AG04450 (cell line): ENCODE measurements at regions of chr1 and their contacts with region 1.

Region 1: GRCh38 chr1:67535474-67535873 is 105.3 kb upstream of the SERBP1 start:
- DNase-seq: peak; percentile 65
- H3K4me3 ChIP-seq: no peak overlapping the region
- H3K27ac ChIP-seq: no peak overlapping the region
- H3K27me3 ChIP-seq: no peaks in the 10 kb centered on the region
- CTCF ChIP-seq: peak; percentile 99

Region 2: GRCh38 chr1:67552336-67552759 is 16.9 kb after region 1 on chr1:
- CTCF ChIA-PET with region 1: interaction called, 19 read pairs
- POLR2A ChIA-PET with region 1: no interaction called
- DNase-seq: no peak
- H3K4me3 ChIP-seq: no peak overlapping the region
- H3K27ac ChIP-seq: no peak overlapping the region
- H3K27me3 ChIP-seq: no peaks in the 10 kb centered on the region
- CTCF ChIP-seq: 0 out of 2 replicates have a peak, but pooled peaks have one; percentile 3

Region 3: DNA sequence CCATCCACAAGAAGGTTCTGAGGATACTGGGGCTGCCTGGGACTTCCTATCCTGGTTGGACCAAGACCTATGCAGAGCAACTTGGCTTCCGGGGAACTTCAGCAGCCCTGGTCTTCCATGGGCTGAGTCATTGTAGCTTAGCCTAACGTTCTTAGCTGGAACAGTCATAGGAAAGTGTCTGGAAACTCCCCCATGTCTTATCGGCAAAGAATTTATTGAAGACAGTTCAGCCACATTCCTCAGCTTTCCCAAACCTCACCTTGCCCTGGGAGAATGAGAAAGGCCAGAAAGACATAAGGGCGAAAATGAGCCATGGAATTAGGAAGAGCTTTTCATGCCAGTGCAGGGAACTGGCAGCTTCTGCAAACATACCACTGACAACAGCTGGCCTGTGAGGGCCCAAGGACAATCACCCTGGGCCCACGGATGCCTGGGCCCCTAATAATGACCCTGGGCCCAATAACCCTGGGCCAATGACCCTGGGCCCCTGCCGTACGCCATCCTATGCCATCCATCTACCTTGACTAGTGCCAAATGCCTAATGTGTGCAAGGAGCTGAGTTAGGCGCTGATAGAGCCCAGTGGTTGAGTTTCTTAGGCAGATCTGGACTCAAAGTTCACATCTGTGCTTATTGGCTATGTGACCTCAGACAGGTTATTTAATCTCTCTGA is 35.1 kb after region 1 on chr1:
- CTCF ChIA-PET with region 1: interaction called, 21 read pairs
- POLR2A ChIA-PET with region 1: no interaction called
- DNase-seq: peak; percentile 86
- H3K4me3 ChIP-seq: no peak overlapping the region
- H3K27ac ChIP-seq: peak overlapping the region; percentile 89
- H3K27me3 ChIP-seq: no peaks in the 10 kb centered on the region
- CTCF ChIP-seq: no peak

Region 4: DNA sequence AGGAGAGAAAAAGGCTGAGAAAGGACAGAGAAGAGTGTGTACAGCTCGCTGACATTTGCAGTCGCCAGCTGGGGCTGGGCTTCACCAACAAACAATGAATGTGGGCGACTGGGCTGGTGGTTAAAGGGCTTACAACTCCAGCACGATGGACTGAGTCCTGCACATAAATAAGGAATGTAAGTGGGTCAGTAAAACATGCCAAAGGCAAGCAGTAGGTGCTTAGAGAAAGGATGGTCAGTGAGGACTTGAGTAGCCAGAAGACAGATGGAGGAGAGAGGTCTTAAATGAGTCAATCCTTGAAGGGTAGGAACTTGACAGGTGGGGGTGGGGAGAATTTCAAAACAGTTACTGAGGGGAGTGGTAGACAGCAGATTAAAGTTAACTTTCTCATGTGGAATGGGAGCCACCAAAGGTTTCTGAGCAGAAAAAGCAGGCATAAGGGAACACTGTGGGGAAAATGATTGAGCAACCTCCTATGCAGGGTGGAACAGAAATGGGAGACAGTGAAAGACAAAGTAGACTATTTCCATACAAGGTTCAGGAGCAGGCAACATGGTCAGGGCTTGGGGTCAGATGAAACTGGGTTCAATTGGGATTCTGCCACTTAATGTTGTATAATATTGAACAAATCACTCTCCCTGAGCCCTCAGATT is 186.9 kb after region 1 on chr1:
- CTCF ChIA-PET with region 1: interaction called, 10 read pairs
- POLR2A ChIA-PET with region 1: no interaction called
- DNase-seq: no peak
- H3K4me3 ChIP-seq: no peak overlapping the region
- H3K27ac ChIP-seq: no peak overlapping the region
- H3K27me3 ChIP-seq: no peaks in the 10 kb centered on the region
- CTCF ChIP-seq: no peak

Region 5: GRCh38 chr1:67749844-67750689 is 214.6 kb after region 1 on chr1:
- CTCF ChIA-PET with region 1: interaction called, 456 read pairs
- POLR2A ChIA-PET with region 1: no interaction called
- DNase-seq: peak; percentile 61
- H3K4me3 ChIP-seq: peak overlapping the region; percentile 8; the same call in 1 of the 2 replicates
- H3K27ac ChIP-seq: peak overlapping the region; percentile 94
- H3K27me3 ChIP-seq: no peaks in the 10 kb centered on the region
- CTCF ChIP-seq: no peak

Region 6: DNA sequence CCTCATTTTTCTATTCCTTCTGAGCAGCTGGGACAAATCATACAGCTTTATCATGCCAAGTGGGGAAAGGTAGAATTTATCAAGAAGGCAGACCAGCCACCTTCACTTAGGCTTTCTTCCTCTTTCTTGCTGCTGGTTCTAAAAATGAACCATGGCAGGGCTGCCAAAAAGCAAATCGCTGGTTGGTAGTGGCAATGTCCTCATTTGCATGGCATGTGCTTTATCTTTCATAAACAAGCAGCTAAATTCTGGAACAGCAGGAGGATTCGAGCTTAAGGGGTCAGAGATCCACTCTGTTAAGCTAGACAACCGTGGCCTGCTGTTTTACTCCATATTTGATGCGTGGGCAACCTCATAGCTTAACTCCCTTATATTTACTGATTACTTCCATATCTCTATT is 823.0 kb after region 1 on chr1:
- CTCF ChIA-PET with region 1: interaction called, 10 read pairs
- POLR2A ChIA-PET with region 1: no interaction called
- DNase-seq: no peak
- H3K4me3 ChIP-seq: no peak overlapping the region
- H3K27ac ChIP-seq: no peak overlapping the region
- H3K27me3 ChIP-seq: no peaks in the 10 kb centered on the region
- CTCF ChIP-seq: no peak